ENCODE measurements at regions of chr1 and their contacts with region 1.

Region 1: DNA sequence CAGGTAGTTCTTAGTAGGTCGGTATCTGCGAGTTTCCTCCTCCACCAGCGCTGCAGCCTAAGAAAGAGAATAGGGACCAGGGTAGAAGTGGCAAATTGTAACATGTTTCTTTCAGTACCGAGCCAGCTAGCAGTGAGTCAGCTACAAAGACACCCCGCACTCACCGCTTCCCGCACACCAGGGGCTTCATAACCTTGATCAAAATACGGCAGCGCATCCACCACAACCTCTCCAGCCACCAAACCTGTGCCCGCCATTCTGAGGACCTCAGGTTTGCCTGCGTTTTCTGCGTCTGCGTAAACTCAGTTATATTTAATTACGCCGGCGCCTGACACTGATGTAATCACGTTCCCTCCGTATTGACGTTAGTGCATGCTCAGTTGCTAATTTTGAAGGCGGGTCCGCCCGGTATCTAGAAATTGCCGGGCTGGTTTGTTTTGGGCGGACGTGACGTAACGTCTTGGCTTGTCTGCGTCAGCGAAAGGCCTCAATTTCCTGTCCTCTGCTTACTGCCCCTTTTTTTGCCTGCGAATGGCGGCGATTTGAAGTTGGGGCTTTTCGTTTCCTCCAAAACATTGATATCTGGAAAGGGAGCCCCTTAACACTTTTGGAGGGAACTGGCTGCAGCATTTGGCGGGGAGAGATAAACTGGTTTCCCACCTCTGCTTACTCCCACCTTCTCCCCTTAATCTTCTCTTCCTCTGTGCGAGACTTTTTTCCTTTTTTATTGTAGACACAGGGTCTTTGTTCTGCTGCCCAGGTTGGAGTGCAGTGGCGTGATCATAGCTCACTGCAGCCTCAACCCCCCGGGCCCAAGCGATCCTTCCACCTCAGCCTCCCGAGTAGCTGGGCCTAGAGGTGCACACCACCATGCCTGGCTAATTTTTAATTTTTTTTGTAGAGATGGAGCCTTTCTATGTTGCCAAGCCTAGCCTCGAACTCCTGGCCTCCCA is at the start of gene BCAS2:
- DNase-seq: peak; percentile 98
- H3K4me3 Mint-ChIP-seq: peak within 1 kb of the TSS; percentile 85
- H3K27ac Mint-ChIP-seq: peak within 1 kb of the TSS; percentile 83
- H3K4me1 Mint-ChIP-seq: peaks cover 29% of the 10 kb centered on the region
- H3K27me3 Mint-ChIP-seq: no peaks in the 10 kb centered on the region
- total RNA-seq, gene BCAS2: 48.5 to 49.0 TPM

Region 2: DNA sequence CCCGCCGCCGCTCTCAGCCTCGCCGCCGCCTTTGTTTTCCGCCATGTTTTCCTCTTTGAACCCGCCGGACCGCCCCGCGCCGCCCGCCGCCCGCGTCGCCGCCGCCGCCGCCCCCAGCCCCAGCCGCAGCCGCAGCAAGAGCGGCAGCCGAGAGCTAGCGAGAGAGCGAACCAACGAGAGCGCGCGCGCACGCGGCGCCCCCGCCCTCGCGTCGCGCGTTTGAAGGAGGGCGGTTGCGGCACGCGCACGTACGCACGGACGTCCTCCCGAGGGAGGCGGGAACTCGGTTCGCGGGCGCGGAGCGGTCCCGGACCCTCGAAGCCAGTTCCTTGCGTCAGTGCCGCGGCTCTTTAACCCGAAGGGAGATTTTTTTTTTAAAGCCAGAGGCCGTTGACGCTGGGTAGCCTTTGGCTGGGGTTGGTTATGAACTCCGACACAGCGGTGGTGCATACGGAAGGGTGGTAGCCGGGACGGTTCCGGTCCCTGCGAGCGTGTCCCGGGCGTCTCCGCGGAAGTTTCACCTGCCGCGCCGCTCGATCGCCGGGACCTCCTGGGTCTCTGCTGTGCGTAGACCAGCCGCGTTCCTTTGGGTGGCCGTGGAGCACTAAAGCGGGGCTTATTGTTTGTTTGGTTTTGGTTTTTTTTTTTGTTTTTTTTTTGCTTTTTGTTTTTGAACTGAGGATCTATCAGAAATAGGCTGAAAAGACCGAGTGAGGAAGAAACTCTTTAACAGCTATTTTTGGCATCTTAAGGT is 70.4 kb before region 1 on chr1 and contains the start of gene TRIM33:
- CTCF ChIA-PET with region 1: interaction called, 6 read pairs
- POLR2A ChIA-PET with region 1: no interaction called
- intact Hi-C with region 1: loop called (anchors 1 kb)
- DNase-seq: peak; percentile 95
- H3K4me3 Mint-ChIP-seq: peak within 1 kb of the TSS; percentile 91
- H3K27ac Mint-ChIP-seq: peak within 1 kb of the TSS; percentile 98
- H3K4me1 Mint-ChIP-seq: peaks cover 41% of the 10 kb centered on the region
- H3K27me3 Mint-ChIP-seq: no peaks in the 10 kb centered on the region
- total RNA-seq, gene TRIM33: 26.9 to 27.9 TPM

Region 3: GRCh38 chr1:114716304-114717170 is 134.9 kb after region 1 on chr1 and contains the start of gene NRAS:
- CTCF ChIA-PET with region 1: interaction called, 5 read pairs
- POLR2A ChIA-PET with region 1: interaction called, 8 read pairs
- intact Hi-C with region 1: loop called (anchors 1 kb)
- DNase-seq: peak; percentile 97
- H3K4me3 Mint-ChIP-seq: peak within 1 kb of the TSS; percentile 91
- H3K27ac Mint-ChIP-seq: peak within 1 kb of the TSS; percentile 97
- H3K4me1 Mint-ChIP-seq: peaks cover 31% of the 10 kb centered on the region
- H3K27me3 Mint-ChIP-seq: no peaks in the 10 kb centered on the region
- total RNA-seq, gene NRAS: 51.7 to 52.1 TPM

Region 4: DNA sequence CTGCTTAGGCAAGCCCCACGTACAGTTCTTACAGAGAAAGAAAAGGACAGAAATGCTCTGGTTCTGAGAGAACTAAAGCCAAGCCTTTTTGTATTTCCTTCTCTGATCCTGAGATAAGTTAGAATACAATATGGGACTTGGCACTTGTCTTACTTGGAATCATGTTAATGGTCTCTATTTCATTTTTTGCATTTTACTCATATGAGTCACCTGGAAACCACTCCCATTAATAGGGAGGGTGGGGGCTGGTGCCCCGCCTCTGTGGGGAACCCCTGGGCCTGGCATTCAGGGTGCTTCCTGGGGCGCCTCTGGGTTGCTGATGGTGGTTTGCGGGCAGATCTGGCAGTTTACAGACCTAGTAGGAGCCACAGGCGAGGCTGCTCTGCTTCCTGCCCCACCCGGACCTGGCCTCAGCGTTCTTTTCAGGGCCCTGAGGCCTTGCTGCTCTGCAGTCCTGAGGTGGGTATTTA is 481.0 kb after region 1 on chr1:
- CTCF ChIA-PET with region 1: no interaction called
- POLR2A ChIA-PET with region 1: no interaction called
- intact Hi-C with region 1: loop called (anchors 5 kb)
- DNase-seq: peak; percentile 95
- H3K4me3 Mint-ChIP-seq: no peak overlapping the region
- H3K27ac Mint-ChIP-seq: peak overlapping the region; percentile 80
- H3K4me1 Mint-ChIP-seq: peaks cover 43% of the 10 kb centered on the region
- H3K27me3 Mint-ChIP-seq: no peaks in the 10 kb centered on the region

Measured in activated CD4-positive, alpha-beta memory T cell treated with anti-CD3 and anti-CD28 coated beads for 36 hours (primary cell).